ENCODE measurements at regions of chr6 and their contacts with region 1.

Region 1: GRCh38 chr6:132483779-132484679 is 28.9 kb downstream of the STX7 start:
- DNase-seq: peak in 1 of 2 donors; percentile 11
- ATAC-seq: peak; percentile 73 to 82
- H3K4me3 ChIP-seq: peak overlapping the region in 1 of 4 donors; percentile 28
- H3K27ac ChIP-seq: no peak overlapping the region
- H3K4me1 ChIP-seq: peaks cover 10 to 18% of the 10 kb centered on the region in 2 donors
- H3K27me3 ChIP-seq: no peaks in the 10 kb centered on the region
- CTCF ChIP-seq: peak; percentile 57 to 82 (median 74)
- POLR2A ChIP-seq: no peak

Region 2: DNA sequence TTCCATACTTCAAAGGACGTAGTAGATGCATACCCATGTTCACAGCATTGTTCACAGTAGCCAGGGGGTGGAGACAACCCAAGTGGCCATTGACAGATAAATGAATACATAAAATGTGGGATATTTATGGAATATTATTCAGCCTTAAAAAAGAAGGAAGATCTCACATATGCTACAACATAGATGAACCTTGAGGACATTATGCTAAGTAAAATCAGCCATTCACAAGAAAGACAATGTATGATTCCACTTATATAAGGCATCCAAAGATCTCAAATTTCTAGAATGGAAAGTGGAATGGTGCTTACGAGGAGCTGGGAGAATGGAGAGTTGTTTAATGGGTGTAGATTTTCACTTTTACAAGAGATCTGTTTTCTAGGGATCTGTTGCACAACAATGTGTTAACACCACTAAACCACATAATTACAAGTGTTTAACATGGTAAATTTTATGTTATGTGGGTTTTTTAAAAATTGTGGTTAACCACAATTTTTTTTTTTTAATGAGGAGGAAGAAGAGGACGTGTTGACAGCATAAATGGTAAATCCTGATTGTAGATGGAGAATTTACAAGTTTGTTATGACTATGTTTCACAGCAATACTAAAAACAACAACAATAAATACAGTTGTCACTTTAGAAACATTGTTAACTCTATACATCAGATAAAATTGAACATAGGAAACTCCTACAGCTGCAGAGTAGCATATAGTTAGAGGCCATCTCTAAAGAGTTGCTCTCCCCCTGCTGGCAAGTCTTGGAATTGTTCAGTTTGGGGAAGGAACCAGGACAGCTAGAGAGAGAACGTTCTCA is 574.4 kb before region 1 on chr6:
- in situ Hi-C with region 1: loop called in 1 of 4 experiments (anchors 25 kb)
- intact Hi-C with region 1: loop called (anchors 10 kb)
- DNase-seq: peak; percentile 19 to 42
- ATAC-seq: peak; percentile 69 to 76
- H3K4me3 ChIP-seq: no peak overlapping the region
- H3K27ac ChIP-seq: no peak overlapping the region
- H3K4me1 ChIP-seq: no peaks in the 10 kb centered on the region
- H3K27me3 ChIP-seq: no peaks in the 10 kb centered on the region
- CTCF ChIP-seq: peak; percentile 55 to 81 (median 63)
- POLR2A ChIP-seq: no peak

Region 3: GRCh38 chr6:132279592-132280139 is 204.4 kb before region 1 on chr6:
- in situ Hi-C with region 1: loop called (anchors 5 to 10 kb)
- intact Hi-C with region 1: loop called (anchors 2 kb)
- DNase-seq: peak; percentile 37 to 45
- ATAC-seq: peak; percentile 82 to 86
- H3K4me3 ChIP-seq: peak overlapping the region; percentile 49 to 73 (median 55)
- H3K27ac ChIP-seq: no peak overlapping the region
- H3K4me1 ChIP-seq: no peaks in the 10 kb centered on the region
- H3K27me3 ChIP-seq: no peaks in the 10 kb centered on the region
- CTCF ChIP-seq: peak; percentile 72 to 87 (median 83)
- POLR2A ChIP-seq: no peak

Region 4: DNA sequence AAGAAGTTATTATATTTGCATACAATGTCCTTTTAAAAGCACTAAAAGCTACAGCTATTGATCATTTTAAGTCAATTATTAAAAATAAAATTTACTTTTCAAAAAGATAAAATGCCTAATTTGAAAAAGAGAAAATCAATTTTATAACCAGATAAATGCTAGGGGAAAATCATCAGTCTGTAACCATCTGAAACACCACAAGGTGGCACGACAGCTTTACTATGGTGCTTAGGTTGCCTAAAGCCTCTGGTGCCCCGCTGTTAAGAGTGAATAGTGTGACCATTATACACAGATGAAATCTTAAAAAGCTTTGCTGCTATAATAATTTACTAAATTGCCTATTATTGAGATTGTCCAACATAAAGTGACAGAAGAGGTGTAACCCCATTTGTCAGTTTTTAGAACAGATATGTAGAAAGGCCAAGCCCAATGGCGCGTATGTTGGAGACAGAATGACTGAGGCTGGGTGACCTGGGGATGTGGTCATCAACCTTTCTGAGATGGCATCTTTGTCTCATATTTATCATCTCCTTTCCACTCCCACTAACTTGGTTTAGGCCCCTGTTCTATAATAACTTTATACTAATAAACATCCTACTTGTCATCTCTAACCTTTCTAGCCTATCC is 183.6 kb before region 1 on chr6:
- in situ Hi-C with region 1: no loop called
- intact Hi-C with region 1: loop called (anchors 1 kb)
- DNase-seq: no peak
- ATAC-seq: no peak
- H3K4me3 ChIP-seq: no peak overlapping the region
- H3K27ac ChIP-seq: no peak overlapping the region
- H3K4me1 ChIP-seq: no peaks in the 10 kb centered on the region
- H3K27me3 ChIP-seq: no peaks in the 10 kb centered on the region
- CTCF ChIP-seq: peak in 2 of 5 experiments; percentile 21 to 23
- POLR2A ChIP-seq: no peak

Region 5: GRCh38 chr6:132788658-132789395 is 304.8 kb after region 1 on chr6:
- in situ Hi-C with region 1: no loop called
- intact Hi-C with region 1: no loop called
- DNase-seq: no peak
- ATAC-seq: no peak
- H3K4me3 ChIP-seq: no peak overlapping the region
- H3K27ac ChIP-seq: no peak overlapping the region
- H3K4me1 ChIP-seq: no peaks in the 10 kb centered on the region
- H3K27me3 ChIP-seq: no peaks in the 10 kb centered on the region
- CTCF ChIP-seq: no peak
- POLR2A ChIP-seq: no peak

Measured in gastrocnemius medialis (tissue), 4 donors.